ENCODE measurements at regions of chr6 and their contacts with region 1.

Region 1: DNA sequence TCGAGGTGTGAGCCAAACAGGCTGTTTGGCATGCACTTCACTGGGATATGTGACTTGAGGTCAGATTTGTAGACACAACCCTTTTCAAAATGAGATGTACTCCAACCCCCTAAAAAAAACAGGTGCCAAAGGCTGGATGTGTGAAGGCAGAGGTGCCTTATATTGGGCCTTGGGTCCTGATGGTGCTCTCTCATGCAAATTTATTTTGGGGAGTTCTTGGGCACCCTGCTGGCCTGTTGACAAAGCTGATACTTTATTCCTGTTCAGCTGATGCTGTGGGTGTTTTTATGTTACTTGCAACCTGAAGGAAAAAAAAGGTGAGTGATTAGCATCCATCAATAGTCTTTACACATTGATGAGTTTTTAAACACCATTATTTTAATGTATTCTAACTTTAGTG is 121.5 kb downstream of the DNAH8 start:
- DNase-seq: no peak
- H3K4me3 ChIP-seq: no peak overlapping the region
- H3K27ac ChIP-seq: no peak overlapping the region
- H3K4me1 ChIP-seq: no peaks in the 10 kb centered on the region
- H3K27me3 ChIP-seq: no peaks in the 10 kb centered on the region
- CTCF ChIP-seq: no peak
- EP300 ChIP-seq: no peak
- POLR2A ChIP-seq: no peak

Region 2: DNA sequence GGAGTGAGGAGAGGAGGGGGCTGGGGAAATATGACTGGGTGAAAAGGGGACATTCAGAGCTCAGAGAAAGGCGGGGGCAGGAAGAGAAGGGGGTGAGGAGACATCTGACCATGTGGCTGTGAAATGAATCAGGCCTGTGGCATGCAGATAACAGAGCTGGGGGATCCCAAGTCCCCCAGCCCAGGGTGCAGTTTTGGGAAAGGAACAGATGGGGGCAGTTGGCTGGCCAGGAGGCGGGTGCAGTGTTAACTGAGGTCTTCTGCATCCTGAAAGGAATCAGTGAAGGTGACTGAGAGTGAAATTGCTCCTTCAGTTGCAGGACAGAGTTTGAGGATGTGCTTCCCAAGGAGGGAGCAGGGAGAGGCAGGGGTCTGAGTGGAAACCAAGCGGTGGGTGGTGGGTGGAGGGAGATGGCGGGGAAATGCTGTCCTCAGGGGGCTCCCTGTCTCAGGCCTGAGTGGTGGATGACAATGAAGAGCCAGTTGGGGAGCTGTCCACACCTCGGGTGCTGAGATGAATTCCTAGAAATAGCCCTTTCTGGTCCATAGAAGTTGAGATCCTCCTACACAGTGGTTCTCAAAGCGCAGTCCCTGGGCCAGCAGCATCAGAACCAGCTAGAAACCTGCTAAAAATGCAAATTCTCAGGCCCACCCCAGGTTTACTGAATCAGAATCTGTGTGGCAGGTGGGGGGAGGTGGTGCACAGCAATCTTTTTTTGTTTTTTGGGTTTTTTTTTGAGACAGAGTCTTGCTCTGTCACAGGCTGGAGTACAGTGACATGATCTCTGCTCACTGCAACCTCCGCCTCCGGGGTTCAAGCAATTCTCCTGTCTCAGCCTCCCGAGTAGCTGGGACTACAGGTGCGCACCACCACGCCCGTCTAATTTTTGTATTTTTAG is 1310.9 kb before region 1 on chr6:
- in situ Hi-C with region 1: no loop called
- intact Hi-C with region 1: loop called (anchors 10 kb)
- DNase-seq: no peak
- H3K4me3 ChIP-seq: no peak overlapping the region
- H3K27ac ChIP-seq: no peak overlapping the region
- H3K4me1 ChIP-seq: no peaks in the 10 kb centered on the region
- H3K27me3 ChIP-seq: peaks cover 41% of the 10 kb centered on the region
- CTCF ChIP-seq: no peak
- EP300 ChIP-seq: no peak
- POLR2A ChIP-seq: no peak

Region 3: DNA sequence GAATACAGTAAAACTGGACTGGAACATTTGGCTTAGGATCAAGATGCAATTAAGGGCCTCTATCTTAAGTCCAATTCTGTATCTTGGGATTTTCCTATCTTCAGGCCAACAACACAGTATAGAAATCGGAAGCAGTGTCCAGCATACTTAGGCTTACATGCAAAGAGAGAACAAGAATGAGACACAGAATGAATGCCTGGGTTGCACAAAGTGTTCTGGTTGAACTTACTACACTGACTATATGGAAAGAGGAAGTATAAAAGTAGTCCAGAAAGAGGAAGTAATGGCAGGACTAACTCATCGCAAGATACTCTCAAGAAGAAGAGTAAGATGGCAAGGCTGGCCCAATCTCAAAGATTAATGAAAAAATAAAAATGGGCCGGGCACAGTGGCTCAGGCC is 284.5 kb before region 1 on chr6:
- in situ Hi-C with region 1: no loop called
- intact Hi-C with region 1: no loop called
- DNase-seq: no peak
- H3K4me3 ChIP-seq: no peak overlapping the region
- H3K27ac ChIP-seq: no peak overlapping the region
- H3K4me1 ChIP-seq: no peaks in the 10 kb centered on the region
- H3K27me3 ChIP-seq: no peaks in the 10 kb centered on the region
- CTCF ChIP-seq: no peak
- EP300 ChIP-seq: no peak
- POLR2A ChIP-seq: no peak

Region 4: GRCh38 chr6:39048481-39049399 is 212.2 kb after region 1 on chr6 and contains the start of gene GLP1R:
- in situ Hi-C with region 1: no loop called
- intact Hi-C with region 1: no loop called
- DNase-seq: no peak
- H3K4me3 ChIP-seq: peak within 1 kb of the TSS in 2 of 4 donors; percentile 22 to 44
- H3K27ac ChIP-seq: no peak within 1 kb of the TSS
- H3K4me1 ChIP-seq: peaks cover 0 to 12% (median 9%) of the 10 kb centered on the region in 4 donors
- H3K27me3 ChIP-seq: peaks cover 51% of the 10 kb centered on the region
- CTCF ChIP-seq: no peak
- EP300 ChIP-seq: no peak
- POLR2A ChIP-seq: no peak
- total RNA-seq, gene GLP1R: not detected

Region 5: GRCh38 chr6:39062014-39062740 is 225.6 kb after region 1 on chr6:
- in situ Hi-C with region 1: no loop called
- intact Hi-C with region 1: no loop called
- DNase-seq: no peak
- H3K4me3 ChIP-seq: no peak overlapping the region
- H3K27ac ChIP-seq: no peak overlapping the region
- H3K4me1 ChIP-seq: peaks cover 0 to 3% (median 1%) of the 10 kb centered on the region in 4 donors
- H3K27me3 ChIP-seq: peaks cover 7% of the 10 kb centered on the region
- CTCF ChIP-seq: no peak
- EP300 ChIP-seq: no peak
- POLR2A ChIP-seq: no peak

Measured in transverse colon (tissue), 4 donors.